ENCODE measurements at regions of chr1 and their contacts with region 1.

Region 1: DNA sequence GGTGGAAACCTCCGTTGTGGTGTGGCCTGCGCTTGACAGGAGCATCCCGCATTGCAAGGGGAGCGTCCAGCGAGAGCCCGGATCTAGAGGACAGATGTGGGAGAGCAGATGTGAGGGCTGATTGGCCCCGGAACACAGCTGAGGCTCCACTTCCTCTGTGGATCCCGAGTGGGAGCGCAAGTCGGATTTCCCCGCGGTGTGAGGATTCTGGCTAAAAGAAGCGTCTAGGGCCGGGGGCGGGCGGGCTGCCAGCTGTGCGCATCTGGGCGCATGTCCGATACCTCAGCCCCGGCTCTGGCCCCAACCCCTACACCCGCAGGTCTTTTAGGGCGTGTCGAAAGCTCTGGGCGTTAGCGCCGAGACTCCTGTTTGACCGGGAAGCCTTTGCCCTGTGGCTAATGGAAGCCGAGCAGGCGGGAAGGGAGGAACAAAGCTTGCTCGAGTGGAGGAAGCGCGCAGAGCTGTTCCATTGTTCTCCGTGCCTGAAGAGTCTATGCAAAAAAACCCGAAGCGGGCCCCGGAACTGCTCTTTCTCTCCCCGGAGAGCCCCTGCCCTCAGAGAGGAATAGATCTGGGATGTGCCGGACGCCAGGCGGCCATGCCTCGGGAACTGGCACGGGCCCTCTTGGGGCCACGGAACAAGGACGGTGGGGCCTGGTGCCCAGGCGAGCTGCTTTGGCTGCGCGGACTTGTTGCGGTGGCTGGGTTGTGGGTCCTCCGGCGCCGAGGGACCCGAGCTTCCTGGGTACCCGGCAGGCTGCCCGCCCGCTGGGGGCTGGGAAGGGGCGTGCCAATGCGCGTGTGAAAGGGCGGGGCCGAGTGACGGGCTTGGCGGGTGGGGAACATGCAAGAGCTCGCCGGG is 111.1 kb downstream of the NAV1 start:
- DNase-seq: peak; percentile 90
- ATAC-seq: peak; percentile 70

Region 2: DNA sequence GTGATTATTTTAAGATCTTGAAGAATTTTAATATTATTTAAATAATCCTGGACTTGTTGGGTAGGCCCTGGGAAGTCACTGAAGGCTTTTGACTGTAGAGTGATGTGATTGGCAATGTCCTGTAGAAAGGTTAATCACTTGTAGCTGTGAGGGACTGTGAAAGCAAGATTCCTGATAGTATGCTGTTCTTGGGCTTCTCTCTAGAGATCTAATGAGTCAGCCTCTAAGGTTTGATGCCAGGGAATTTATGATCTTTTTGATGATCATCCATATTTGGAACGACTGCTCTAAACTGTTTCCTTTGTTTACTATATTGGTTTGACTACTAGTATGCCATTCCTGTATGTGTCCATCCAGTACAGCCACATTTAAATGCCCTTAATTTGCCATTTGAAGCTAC is 854.8 kb before region 1 on chr1:
- intact Hi-C with region 1: no loop called
- DNase-seq: no peak
- ATAC-seq: no peak

Region 3: DNA sequence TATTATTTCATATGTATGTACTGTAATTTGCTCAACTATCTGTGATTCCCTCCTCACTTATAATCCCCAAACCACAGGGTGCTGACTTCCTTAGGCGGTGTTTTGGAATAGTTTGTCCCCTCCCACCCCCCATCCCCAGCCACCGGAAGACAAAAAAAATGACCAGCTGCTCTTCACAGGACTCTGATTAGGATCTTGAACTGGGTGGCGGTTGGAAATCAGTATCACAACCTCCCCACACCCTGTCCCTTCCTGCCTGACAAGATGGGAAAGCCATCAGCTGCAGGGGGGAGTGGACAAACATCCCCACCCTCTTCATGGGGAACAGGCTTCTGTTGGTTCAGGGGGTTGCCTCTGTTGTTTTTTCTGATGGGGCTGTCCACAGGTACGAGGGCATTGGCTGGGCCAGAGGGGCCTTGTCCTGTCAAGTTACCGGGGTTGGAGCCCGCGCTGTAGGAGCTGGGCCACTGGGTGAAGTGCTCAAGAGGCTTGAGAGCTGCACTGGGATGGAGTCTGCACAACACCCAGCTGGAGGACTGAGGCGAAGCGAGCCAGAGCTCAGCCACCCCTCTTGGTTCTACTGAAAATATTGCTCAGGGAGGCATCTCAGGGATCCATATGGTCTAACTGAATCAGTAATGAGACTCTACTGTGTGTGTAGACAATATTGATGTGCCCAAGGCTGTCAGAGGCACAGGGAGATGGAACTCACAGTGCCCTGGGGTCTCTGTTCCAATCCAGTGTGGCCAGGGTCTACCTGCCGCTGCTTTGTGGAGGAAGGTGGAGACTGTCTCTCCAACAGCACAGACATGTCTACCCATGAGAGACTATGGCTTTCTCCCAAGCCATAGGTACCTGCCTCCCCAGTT is 82.8 kb before region 1 on chr1:
- intact Hi-C with region 1: loop called (anchors 2 kb)
- DNase-seq: no peak
- ATAC-seq: no peak

Region 4: DNA sequence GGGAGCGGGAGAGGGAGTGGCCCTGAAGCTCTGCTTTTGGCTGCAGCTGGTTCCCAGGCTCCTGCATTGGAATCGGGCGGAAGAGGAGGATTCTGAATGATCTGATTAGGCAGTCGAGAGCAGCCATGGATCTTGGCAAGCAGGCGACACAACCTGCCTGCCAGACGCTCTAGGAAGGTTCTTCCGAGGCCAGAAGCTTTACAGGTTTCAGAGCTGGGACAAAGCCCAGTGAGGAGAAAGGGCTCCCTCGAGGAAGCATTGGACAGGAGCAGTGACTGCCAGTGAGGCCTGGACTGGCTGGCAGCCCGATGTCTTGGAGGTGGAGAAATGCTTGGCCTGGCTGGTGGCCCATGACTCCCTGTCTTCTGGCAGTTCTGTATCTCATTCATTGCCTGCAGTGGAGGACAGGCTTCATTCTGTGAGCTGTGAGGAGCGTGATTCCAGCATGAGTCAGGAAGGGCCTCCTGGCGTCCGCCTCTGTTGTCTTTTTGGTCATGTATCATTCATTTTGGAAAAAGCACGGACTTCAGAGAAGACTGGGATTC is 46.3 kb after region 1 on chr1:
- intact Hi-C with region 1: loop called (anchors 5 kb)
- DNase-seq: peak; percentile 91
- ATAC-seq: peak; percentile 88

Region 5: GRCh38 chr1:202189001-202189790 is 539.2 kb after region 1 on chr1:
- intact Hi-C with region 1: no loop called
- DNase-seq: peak; percentile 85
- ATAC-seq: peak; percentile 45

Measured in Right ventricle myocardium inferior (tissue), 1 donor.